Mammary epithelial cell (primary cell): ENCODE measurements at regions of chr11 and their contacts with region 1.

Region 1: DNA sequence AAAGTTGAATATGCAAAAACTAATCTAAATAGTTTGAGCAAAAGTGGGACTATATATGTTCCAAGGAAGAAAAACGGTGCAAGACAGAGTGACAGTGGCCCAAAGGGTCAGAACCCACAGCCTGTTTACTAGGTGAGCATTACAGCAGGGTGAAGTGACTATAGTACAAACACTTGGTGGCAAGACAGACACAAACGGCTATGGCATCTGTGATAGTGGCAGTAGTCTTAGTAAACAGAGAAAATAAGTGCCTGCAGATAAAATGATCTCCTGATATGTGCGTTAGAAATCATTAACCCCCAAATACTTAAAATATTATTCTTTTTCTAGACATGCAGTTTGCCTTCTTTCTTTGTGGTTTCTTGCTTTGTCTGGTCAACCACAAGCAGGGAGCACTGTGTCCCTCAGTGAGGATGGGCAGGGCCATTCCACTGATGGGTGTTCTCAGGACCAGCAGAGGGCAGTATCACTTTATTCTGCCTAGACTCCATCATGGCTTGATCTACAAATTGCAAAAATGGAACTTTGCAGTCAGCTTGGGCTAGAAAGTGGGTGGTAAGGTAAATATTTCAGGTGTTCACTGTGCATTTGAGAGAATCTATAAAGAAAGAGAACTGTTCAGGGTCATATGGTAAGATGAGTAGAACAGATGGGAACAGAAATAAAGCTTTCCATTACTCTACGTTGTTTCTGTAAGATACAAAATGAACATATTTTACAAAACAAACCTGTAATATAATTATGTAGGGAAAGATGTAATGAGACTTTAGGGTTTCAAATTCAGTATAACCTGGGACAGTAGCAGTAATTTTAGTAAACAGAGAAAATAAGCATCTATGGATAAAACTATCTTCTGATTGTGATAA is 198.2 kb downstream of the SWAP70 start:
- DNase-seq: peak; percentile 60
- H3K4me3 ChIP-seq: no peak overlapping the region
- H3K27ac ChIP-seq: no peak overlapping the region
- H3K4me1 ChIP-seq: peaks cover 6% of the 10 kb centered on the region
- H3K27me3 ChIP-seq: no peaks in the 10 kb centered on the region
- CTCF ChIP-seq: peak; percentile 90 to 91

Region 2: DNA sequence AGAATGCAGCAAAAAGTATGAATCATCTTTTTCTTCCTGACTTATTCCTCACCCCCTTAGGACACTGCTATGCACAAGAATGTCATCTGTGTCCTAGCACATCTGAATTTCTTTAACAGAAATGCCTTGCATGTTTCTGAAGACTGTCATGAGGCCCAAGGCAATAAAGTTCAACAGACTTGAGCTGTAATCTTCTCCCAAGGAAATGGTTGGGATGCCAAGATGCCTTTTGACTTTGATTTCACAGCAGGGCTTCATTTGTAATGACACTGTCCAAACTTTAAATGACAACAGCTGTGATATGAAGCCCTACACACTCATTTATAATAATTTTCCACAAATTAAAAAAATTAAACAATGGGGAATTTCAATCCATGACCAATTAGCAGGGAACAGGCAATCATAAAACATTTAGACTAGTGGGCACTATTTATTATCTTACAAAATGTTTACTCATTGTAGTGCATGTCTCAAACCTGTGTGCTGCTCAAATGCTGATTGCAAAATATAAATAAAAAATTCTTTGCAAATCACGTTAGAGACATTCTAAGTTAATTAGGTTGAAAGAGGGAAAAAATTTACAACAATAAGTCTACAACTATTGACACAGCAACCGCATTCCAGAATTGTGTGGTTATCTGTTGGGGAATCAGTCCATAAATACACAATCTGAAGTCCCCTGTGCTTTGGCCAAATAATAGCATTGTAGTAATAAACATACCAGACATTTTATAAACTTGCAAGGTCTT is 44.1 kb after region 1 on chr11:
- CTCF ChIA-PET with region 1: no interaction called
- dilution Hi-C with region 1: no loop called
- in situ Hi-C with region 1: no loop called
- intact Hi-C with region 1: loop called (anchors 5 kb)
- DNase-seq: peak; percentile 81
- H3K4me3 ChIP-seq: no peak overlapping the region
- H3K27ac ChIP-seq: peak overlapping the region; percentile 73
- H3K4me1 ChIP-seq: peaks cover 31% of the 10 kb centered on the region
- H3K27me3 ChIP-seq: no peaks in the 10 kb centered on the region
- CTCF ChIP-seq: no peak

Region 3: GRCh38 chr11:9972989-9973388 is 110.9 kb after region 1 on chr11:
- CTCF ChIA-PET with region 1: no interaction called
- dilution Hi-C with region 1: no loop called
- in situ Hi-C with region 1: loop called (anchors 5 kb)
- intact Hi-C with region 1: loop called (anchors 1 kb)
- DNase-seq: peak; percentile 39
- H3K4me3 ChIP-seq: no peak overlapping the region
- H3K27ac ChIP-seq: no peak overlapping the region
- H3K4me1 ChIP-seq: no peaks in the 10 kb centered on the region
- H3K27me3 ChIP-seq: no peaks in the 10 kb centered on the region
- CTCF ChIP-seq: peak; percentile 75 to 83

Region 4: DNA sequence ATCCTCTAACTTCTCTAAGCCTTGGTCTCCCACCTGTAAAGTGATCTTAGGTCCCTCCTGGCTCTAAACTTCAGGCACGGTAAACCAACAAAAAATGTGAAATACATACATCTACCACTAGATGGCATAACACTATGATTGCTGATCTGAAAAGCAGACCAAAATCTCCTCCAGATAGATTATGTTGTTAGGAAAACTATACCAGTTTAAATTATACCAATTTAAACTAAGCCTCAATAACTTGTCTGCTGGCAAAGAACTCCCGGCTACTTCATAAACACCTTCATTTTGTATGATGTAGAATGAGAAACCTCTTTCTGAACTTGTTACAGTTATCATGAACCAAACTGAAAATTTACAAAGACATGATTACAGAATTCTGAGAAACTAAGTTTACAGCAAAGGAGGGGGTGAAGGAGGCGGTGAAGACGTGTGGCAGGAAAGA is 346.1 kb after region 1 on chr11:
- CTCF ChIA-PET with region 1: no interaction called
- dilution Hi-C with region 1: no loop called
- in situ Hi-C with region 1: no loop called
- intact Hi-C with region 1: loop called (anchors 10 kb)
- DNase-seq: peak; percentile 44
- H3K4me3 ChIP-seq: no peak overlapping the region
- H3K27ac ChIP-seq: no peak overlapping the region
- H3K4me1 ChIP-seq: no peaks in the 10 kb centered on the region
- H3K27me3 ChIP-seq: no peaks in the 10 kb centered on the region
- CTCF ChIP-seq: peak; percentile 62 to 65

Region 5: DNA sequence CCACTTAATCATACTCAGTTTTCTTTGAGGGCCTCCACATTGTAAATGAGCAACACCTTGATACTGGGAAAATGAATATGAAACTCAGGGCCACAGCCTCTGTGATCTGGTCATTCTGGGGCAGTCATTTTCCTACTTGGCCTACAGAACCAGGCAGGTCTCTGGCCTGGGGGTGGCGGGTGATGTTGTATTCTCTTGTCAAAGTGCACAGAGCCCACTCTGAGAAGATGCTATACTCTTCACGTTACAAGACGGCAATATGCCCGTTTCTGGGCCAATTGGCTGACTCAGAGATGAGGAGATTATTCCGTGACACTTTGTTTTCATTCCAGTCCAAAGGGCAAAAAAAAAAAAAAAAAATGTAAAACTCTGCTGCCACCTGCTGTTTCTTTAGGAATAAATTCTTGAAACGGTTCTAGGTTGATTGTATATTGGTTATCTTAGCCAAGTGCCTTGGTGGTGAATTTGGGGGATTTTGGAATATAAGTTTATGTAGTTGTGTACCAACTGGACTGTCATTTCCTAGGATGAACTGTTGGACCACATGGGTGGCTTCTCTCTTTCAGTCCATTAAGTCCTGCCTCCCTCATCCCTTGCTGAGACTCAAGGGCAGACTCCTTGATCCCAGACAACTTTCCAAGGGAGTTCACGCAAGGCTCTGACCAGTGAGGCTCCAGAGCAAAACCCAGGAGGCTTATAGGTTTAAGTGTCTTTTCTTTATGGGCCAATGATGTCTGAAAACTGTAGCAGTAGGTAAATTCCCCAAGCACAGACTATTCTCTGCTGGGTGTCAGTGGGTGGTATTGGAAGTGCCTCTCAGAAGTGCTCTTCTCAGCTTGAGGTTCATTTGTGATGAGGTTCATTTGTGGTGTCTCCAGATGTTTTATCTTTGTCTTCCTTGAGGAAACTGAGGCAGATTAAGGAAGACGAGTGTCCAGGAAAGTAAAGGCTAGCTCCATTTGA is 461.0 kb after region 1 on chr11:
- CTCF ChIA-PET with region 1: no interaction called
- dilution Hi-C with region 1: no loop called
- in situ Hi-C with region 1: loop called in 1 of 2 experiments (anchors 25 kb)
- intact Hi-C with region 1: loop called (anchors 1 kb)
- DNase-seq: peak; percentile 84
- H3K4me3 ChIP-seq: no peak overlapping the region
- H3K27ac ChIP-seq: peak overlapping the region; percentile 57
- H3K4me1 ChIP-seq: peaks cover 6% of the 10 kb centered on the region
- H3K27me3 ChIP-seq: no peaks in the 10 kb centered on the region
- CTCF ChIP-seq: peak; percentile 42 to 49